ENCODE measurements at regions of chr1 and their contacts with region 1.

Region 1: GRCh38 chr1:67489643-67490042 is 59.4 kb upstream of the SERBP1 start:
- DNase-seq: no peak
- H3K4me3 ChIP-seq: no peak overlapping the region
- H3K27ac ChIP-seq: no peak overlapping the region
- H3K4me1 ChIP-seq: no peaks in the 10 kb centered on the region
- H3K27me3 ChIP-seq: no peaks in the 10 kb centered on the region
- CTCF ChIP-seq: peak; percentile 14 to 48 (median 31)
- POLR2A ChIP-seq: no peak

Region 2: DNA sequence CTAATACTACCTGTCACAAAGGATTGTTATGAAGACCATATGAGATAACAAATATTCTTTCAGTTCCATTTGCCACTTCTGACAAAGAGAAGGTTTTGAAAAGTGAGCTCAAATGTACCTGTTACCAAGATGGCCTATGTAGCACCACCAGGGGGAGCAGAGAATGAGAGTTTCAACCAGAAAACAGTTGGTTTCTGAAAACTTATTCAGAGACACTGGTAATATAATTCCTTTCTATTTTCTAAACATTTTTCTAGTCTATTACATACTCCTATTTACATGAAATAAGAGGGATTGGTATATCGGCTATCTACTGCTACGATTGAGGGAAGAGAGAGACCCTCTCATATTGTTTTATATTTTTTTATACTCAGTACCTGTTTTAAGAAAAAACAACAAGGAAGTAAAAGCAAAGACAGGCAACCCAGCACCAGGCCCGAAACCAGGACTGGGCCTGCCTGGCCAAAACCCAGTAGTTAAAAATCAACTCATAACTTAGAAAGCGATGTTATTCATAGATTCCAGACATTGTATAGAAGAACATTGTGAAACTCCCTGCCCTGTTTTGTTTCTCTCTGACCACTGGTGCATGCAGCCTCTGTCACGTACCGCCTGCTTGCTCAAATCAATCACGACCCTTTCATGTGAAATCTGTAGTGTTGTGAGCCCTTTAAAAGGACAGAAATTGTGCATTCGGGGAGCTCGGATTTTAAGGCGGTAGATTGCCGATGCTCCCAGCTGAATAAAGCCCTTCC is 275.0 kb before region 1 on chr1:
- intact Hi-C with region 1: loop called (anchors 10 kb)
- DNase-seq: peak in 1 of 2 donors; percentile 17
- H3K4me3 ChIP-seq: no peak overlapping the region
- H3K27ac ChIP-seq: no peak overlapping the region
- H3K4me1 ChIP-seq: no peaks in the 10 kb centered on the region
- H3K27me3 ChIP-seq: no peaks in the 10 kb centered on the region
- CTCF ChIP-seq: peak; percentile 14 to 32 (median 21)
- POLR2A ChIP-seq: no peak

Region 3: DNA sequence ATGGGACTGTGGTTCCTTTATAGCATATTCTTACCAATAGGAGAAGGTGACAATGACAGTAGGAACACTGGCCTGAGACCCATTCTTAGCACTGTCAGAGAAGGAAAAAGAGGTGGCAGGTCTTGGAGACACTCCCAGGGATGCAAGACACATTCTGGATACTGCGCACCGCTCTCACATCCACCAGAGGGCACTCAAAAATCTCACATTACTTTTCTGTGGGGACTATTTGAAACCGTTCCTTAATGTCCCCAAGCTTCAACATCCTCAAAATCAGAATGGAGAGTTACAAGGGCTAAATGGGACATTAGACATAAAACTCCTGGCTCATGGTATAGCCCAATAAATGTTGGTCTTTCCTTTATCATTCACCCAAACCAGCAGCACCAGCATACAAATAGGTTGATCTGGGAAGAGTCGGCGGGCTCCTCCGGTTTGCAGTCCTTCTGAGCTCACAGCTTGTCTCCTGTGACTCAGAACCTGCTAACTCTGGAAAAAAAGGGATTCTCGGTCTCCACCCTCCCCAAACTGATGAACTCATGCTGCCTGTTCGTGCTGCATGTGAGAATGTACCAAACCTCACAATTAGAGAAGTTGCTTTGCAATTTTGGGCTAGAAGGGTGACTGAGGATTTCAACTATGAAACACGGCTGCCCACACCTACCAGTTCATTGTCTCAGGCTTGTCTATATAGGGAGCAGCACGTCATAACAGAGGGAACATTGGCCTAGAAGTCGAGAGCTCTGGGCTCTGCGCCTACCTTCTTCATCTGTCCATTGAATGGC is 141.8 kb before region 1 on chr1:
- intact Hi-C with region 1: loop called (anchors 10 kb)
- DNase-seq: peak; percentile 20 to 21
- H3K4me3 ChIP-seq: no peak overlapping the region
- H3K27ac ChIP-seq: no peak overlapping the region
- H3K4me1 ChIP-seq: no peaks in the 10 kb centered on the region
- H3K27me3 ChIP-seq: no peaks in the 10 kb centered on the region
- CTCF ChIP-seq: peak; percentile 32 to 66 (median 55)
- POLR2A ChIP-seq: no peak

Region 4: DNA sequence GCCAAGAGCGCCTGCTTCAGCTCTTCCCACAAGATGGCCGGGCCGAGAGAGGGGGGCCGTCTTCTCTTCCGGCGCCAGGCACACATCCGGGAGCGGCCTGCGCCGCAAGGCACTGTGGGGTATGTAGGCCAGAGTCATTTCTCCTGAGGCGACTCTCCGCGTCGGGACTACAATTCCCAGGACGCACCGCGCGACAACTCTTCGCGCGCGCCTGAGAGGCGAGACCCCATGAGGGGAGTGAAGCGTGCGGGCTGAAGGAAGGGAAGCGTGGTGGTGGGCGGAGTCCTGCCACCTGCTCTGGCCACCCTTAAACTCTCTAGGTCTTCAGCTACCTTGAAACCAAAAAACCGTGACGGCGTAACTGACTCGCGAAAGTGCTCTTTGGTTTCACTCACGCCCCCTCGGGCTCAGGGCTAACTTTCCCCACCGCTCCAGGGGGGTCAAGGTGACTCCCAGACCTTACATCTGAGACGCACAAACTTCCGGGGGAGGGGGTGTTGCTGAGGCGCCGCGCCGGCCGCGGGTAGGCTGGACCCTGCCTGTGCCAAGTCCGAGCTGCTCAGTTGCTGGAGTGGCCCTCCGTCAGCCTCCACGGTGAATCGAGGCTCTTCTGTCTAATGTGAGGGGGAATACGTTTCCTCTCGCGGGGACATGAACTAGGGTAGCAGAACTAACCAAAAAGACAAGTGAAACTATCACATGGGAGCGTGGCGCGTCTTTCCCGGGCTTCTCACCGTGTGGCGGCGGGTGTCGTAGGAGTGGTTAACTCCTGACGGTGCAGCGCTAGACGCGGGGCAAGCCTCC is 59.1 kb before region 1 on chr1 and contains the start of gene SERBP1:
- intact Hi-C with region 1: no loop called
- DNase-seq: peak; percentile 95 to 97
- H3K4me3 ChIP-seq: peak within 1 kb of the TSS; percentile 73 to 82
- H3K27ac ChIP-seq: peak within 1 kb of the TSS; percentile 91
- H3K4me1 ChIP-seq: no peaks in the 10 kb centered on the region
- H3K27me3 ChIP-seq: no peaks in the 10 kb centered on the region
- CTCF ChIP-seq: peak in 1 of 4 experiments; percentile 8
- POLR2A ChIP-seq: peak; percentile 84 to 86
- total RNA-seq, gene SERBP1: 115 to 307 (median 143) TPM